A673 (cell line): ENCODE measurements at regions of chrX and their contacts with region 1.

Region 1: DNA sequence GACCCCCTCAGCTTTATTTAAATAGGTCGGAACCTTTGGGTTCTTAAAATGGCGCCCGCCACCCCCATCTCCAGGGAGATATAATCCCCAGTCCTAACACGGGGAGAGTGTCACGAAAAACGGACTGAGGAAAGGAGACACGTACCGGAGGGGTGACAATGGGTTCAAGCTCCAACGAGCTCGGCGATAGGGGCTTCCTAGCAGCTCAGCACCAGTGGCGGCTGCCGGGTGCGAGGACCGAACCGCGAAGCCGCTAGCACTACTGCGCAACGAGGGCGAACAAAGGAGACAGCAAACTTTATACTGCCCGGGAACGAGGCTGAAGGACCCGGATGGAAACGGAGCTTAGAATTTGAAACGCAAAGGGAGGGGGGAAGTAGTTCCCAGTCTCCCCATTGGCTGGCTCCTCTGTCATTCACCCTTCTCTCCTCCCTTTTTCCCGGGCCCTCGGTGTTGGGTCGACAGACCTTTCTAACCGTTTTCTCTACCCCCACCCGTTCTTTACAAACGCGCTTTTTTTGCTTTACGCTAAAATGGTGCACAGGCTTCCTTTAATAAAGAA is at the start of gene RBMX:
- DNase-seq: peak; percentile 94
- H3K4me3 ChIP-seq: peak within 1 kb of the TSS; percentile 65
- H3K27ac ChIP-seq: peak within 1 kb of the TSS; percentile 93
- H3K4me1 ChIP-seq: peaks cover 25% of the 10 kb centered on the region
- H3K27me3 ChIP-seq: no peaks in the 10 kb centered on the region
- CTCF ChIP-seq: no peak
- total RNA-seq, gene RBMX: 422 and 432 TPM in 2 replicates

Region 2: GRCh38 chrX:136228839-136229207 is 651.7 kb before region 1 on chrX:
- CTCF ChIA-PET with region 1: no interaction called
- POLR2A ChIA-PET with region 1: no interaction called
- intact Hi-C with region 1: no loop called
- DNase-seq: no peak
- H3K4me3 ChIP-seq: no peak overlapping the region
- H3K27ac ChIP-seq: no peak overlapping the region
- H3K4me1 ChIP-seq: no peaks in the 10 kb centered on the region
- H3K27me3 ChIP-seq: no peaks in the 10 kb centered on the region
- CTCF ChIP-seq: no peak

Region 3: DNA sequence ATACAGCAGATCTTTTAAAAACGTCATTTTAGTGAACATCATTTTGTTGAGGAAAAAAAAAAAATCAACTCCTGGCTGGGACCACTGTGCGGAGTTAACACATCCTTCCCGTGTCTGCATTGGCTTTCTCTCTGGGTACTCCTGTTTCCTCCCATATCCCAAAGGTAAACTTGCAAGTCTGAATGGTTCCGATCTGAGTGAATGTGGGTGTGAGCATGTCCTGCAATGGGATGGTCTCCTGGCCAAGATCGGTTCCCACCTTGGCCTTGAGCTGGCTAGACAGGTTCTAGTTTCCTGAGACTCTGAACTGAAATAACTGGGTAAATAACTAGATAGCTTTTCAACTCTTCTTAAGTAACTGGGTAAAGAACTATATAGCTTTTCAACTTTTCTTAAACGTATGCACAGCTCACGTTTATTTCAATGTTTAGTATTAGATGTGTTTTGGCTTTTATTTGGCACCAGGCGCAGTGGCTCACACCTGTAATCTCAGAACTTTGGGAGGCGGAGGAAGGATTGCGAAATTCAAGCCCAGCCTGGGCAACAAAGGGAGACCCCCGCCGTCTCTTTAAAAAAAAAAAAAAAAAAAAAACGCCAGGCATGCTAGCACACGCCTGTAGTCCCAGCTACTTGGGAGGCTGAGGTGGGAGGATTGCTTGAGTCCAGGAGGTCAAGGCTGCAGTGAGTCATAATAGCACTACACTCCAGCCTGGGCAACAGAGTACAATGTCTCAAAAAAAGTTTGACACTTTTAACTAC is 14.0 kb before region 1 on chrX:
- CTCF ChIA-PET with region 1: no interaction called
- POLR2A ChIA-PET with region 1: interaction called, 20 read pairs
- intact Hi-C with region 1: no loop called
- DNase-seq: no peak
- H3K4me3 ChIP-seq: no peak overlapping the region
- H3K27ac ChIP-seq: no peak overlapping the region
- H3K4me1 ChIP-seq: peaks cover 4% of the 10 kb centered on the region
- H3K27me3 ChIP-seq: no peaks in the 10 kb centered on the region
- CTCF ChIP-seq: no peak

Region 4: DNA sequence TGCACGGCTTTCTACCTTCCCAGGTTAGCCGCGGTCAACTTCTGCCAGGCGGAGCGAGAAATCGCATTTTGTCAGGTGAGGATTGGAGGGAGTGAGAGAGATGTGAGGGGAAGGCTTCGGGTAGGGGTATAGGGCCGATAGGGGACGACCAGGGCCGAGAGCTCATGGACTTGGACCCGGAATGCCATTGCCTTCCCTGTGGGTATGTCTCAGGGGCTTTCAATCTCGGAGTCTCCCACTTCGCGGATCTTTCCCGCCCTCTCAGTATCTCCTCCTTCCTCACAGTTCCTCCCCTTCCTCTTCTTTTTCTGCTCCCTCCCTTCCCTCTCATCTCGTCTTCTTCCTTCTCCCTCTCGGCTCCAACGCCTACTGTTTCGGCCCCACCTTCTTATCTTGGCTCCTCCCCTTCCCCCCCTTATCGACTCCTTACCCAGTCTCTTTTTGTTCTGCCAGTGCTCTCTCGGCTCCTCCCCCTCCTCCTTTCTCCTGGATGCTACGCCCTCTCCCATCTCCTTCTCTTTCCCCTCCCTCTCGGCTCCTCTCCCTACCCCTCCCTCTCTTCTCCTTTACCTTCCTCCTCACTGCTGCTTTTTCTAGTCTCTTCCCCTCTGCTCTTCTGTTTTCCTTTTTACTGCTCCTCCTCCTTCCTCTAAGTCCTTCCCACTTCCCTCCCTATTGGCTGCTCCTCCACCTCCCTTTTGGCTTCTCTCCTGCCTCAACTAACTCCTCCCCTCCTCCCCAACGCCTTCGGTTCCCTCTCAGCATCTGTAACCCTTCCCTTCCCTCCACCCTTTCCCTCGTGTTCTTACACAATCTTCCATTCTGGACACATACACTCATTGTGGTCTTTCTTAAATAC is 29.4 kb after region 1 on chrX:
- CTCF ChIA-PET with region 1: interaction called, 3 read pairs
- POLR2A ChIA-PET with region 1: interaction called, 4 read pairs
- intact Hi-C with region 1: loop called (anchors 1 kb)
- DNase-seq: peak; percentile 96
- H3K4me3 ChIP-seq: peak overlapping the region; percentile 63
- H3K27ac ChIP-seq: peak overlapping the region; percentile 91
- H3K4me1 ChIP-seq: peaks cover 5% of the 10 kb centered on the region
- H3K27me3 ChIP-seq: no peaks in the 10 kb centered on the region
- CTCF ChIP-seq: no peak